Activated CD8-positive, alpha-beta memory T cell treated with anti-CD3 and anti-CD28 coated beads, Interleukin-2, amount 10 ng/mL, durations not matched to agents 7 days and 5 days (primary cell): ENCODE measurements at regions of chr17 and their contacts with region 1.

Region 1: GRCh38 chr17:49210158-49211029 is at the starts of genes ABI3 and GNGT2:
- DNase-seq: peak; percentile 87
- ATAC-seq: peak; percentile 87
- H3K4me3 Mint-ChIP-seq: peak within 1 kb of the TSS; percentile 98
- H3K27ac Mint-ChIP-seq: peak within 1 kb of the TSS; percentile 85
- H3K4me1 Mint-ChIP-seq: peaks cover 54% of the 10 kb centered on the region
- H3K27me3 Mint-ChIP-seq: no peaks in the 10 kb centered on the region
- total RNA-seq, gene ABI3: 116 to 121 TPM
- total RNA-seq, gene GNGT2: 39.8 to 45.3 TPM

Region 2: GRCh38 chr17:49191917-49192741 is 18.3 kb before region 1 on chr17:
- CTCF ChIA-PET with region 1: interaction called, 32 read pairs
- DNase-seq: peak; percentile 95
- ATAC-seq: peak; percentile 56
- H3K4me3 Mint-ChIP-seq: peak overlapping the region; percentile 88
- H3K27ac Mint-ChIP-seq: peak overlapping the region; percentile 97
- H3K4me1 Mint-ChIP-seq: peaks cover 53% of the 10 kb centered on the region
- H3K27me3 Mint-ChIP-seq: no peaks in the 10 kb centered on the region

Region 3: DNA sequence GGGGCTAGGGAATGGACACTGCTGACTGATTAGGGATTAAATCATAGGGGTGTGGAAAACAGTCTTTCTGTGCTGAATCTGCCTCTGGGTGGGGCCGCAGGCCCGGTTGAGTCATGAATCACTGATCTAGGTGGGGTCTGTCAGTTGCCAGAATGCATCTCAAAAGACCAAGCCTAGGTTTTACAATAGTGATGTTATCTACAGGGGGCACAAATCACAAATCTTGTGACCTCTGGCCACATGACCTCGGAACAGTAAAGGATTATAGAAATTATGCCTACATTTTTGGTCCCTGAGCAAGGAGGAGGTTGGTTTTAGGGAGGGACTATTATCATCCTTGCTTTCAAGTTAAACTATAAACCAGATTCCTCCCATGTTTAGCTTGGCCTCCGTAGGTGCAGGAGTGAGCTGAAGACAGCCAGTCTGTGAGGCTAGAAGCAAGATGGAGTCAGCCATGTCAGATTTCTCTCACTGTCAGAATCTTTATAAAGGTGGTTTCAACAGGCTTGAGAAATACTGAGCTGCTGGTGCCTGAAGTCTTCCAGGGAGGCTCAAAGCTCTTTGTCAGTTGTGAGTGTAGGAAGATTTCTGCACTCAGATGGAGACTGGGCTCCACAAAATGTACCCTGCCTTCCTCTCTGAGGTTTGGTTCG is 12.9 kb before region 1 on chr17:
- CTCF ChIA-PET with region 1: interaction called, 32 read pairs
- DNase-seq: no peak
- ATAC-seq: no peak
- H3K4me3 Mint-ChIP-seq: no peak overlapping the region
- H3K27ac Mint-ChIP-seq: no peak overlapping the region
- H3K4me1 Mint-ChIP-seq: peaks cover 41% of the 10 kb centered on the region
- H3K27me3 Mint-ChIP-seq: no peaks in the 10 kb centered on the region

Region 4: GRCh38 chr17:49223517-49224197 is 13.3 kb after region 1 on chr17:
- CTCF ChIA-PET with region 1: interaction called, 46 read pairs
- DNase-seq: peak; percentile 82
- ATAC-seq: peak; percentile 17
- H3K4me3 Mint-ChIP-seq: peak overlapping the region; percentile 54
- H3K27ac Mint-ChIP-seq: peak overlapping the region; percentile 28
- H3K4me1 Mint-ChIP-seq: peaks cover 63% of the 10 kb centered on the region
- H3K27me3 Mint-ChIP-seq: no peaks in the 10 kb centered on the region

Region 5: DNA sequence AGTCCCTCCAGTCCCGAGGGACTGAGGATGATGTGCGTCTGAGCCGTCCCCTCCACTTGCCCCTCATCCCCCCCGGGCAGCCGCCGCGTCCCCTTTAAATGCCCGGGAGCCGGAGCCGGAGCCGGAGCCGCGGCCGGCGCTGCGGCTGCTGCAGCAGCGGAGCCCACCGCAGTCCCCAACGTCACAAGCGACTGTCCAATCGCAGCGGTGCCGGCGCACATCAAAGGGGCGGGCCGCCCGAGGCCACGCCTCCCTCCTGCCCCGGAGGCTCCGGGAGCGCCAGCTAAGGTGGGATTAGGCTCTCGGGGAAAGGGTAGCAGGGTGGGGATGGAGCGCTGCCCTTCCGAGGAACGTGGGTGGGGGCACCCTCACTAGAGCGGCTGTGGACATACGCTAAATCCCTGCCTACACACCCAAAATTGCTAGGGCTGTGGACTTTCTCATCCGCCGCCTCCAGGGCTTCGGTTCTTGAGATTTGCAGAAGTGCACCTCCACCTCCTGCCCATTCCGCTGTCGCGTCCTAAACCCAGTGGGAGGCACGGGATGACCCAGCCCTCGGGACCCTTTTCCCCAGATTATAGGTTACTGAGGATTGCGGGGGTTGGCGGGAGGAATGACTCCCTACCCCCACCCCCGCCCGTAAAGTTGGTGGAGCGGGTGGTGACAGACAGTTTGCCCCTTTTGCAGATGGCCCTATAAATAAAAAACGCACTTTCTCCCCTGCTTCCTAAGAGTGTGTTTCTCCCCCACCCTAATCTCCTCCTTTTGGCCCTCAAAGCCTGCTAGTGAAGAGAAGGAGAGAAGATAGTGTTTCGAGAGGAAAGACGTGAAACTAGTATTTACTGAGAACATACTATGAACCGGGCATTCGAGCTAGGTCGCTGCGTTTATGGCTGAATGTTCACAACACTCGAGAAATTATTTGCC is 20.5 kb after region 1 on chr17 and contains the start of gene PHOSPHO1:
- CTCF ChIA-PET with region 1: interaction called, 19 read pairs
- DNase-seq: peak; percentile 90
- ATAC-seq: peak; percentile 91
- H3K4me3 Mint-ChIP-seq: peak within 1 kb of the TSS; percentile 62
- H3K27ac Mint-ChIP-seq: no peak within 1 kb of the TSS
- H3K4me1 Mint-ChIP-seq: peaks cover 34% of the 10 kb centered on the region
- H3K27me3 Mint-ChIP-seq: peaks cover 30% of the 10 kb centered on the region
- total RNA-seq, gene PHOSPHO1: not detected